B cell (primary cell): ENCODE measurements at regions of chr3 and their contacts with region 1.

Region 1: GRCh38 chr3:127697551-127698240 is 24.9 kb downstream of the ABTB1 start:
- DNase-seq: peak; percentile 77
- ATAC-seq: peak; percentile 74
- H3K4me3 ChIP-seq: peak overlapping the region in 4 of 5 experiments; percentile 9 to 48 (median 42)
- H3K4me3 Mint-ChIP-seq: peak overlapping the region; percentile 82
- H3K27ac ChIP-seq: peak overlapping the region in 1 of 2 donors; percentile 12
- H3K27ac Mint-ChIP-seq: peak overlapping the region; percentile 87
- H3K4me1 ChIP-seq: peaks cover 10 to 22% of the 10 kb centered on the region in 2 donors
- H3K4me1 Mint-ChIP-seq: peaks cover 26% of the 10 kb centered on the region
- H3K27me3 ChIP-seq: no peaks in the 10 kb centered on the region
- H3K27me3 Mint-ChIP-seq: no peaks in the 10 kb centered on the region
- CTCF ChIP-seq: no peak

Region 2: DNA sequence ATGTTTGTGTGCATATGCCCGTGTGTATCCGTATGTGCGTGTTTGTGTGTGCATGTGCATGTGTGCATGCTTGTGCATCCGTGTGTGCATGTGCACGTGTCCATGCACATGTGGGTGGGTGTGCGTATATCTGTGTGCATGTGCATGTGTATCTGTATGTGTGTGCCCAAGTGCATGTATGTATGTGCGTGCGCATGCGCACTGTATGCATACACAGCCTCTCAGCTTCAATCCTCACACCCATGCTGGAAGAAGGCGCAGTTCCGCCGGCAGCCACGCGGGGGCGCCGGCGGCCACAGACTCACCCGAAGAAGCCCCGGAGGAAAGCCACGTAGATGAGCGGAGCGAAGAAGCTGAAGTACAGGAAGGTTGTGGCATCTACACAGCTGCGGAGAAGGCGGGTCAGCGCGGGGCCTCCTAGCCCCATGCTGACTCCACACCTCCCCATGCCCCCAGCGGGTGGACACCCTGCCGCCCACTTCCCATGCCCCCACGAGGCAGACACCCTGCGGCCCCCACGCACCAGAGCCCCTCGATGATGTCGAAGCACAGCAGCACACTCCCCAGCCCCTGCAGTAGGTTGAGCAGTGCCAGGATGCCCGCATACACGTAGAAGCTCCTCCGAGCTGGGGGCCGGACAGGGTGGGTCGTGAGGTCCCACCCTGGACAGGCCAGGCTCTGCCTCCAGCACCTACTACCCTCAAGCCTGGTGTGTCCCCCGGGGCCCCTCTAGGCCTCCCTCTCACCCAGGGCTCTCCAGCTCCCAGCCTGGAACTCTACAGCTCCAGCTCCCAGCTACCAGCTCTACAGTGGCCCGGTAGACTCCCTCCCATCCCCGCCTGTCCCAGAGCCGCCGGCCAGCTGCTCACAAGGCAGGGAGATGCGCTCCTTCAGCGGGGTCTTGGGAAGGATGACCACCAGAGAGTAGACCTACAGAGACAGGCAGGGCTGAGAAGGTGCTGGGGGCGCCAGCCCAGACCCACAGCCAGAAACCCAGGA is 122.5 kb before region 1 on chr3:
- CTCF ChIA-PET with region 1: interaction called, 11 read pairs
- POLR2A ChIA-PET with region 1: interaction called, 5 read pairs
- intact Hi-C with region 1: loop called (anchors 1 kb)
- DNase-seq: peak; percentile 92
- ATAC-seq: peak; percentile 97
- H3K4me3 ChIP-seq: no peak overlapping the region
- H3K4me3 Mint-ChIP-seq: peak overlapping the region; percentile 52
- H3K27ac ChIP-seq: no peak overlapping the region
- H3K27ac Mint-ChIP-seq: peak overlapping the region; percentile 62
- H3K4me1 ChIP-seq: peaks cover 4 to 10% of the 10 kb centered on the region in 2 donors
- H3K4me1 Mint-ChIP-seq: peaks cover 9% of the 10 kb centered on the region
- H3K27me3 ChIP-seq: no peaks in the 10 kb centered on the region
- H3K27me3 Mint-ChIP-seq: no peaks in the 10 kb centered on the region
- CTCF ChIP-seq: peak; percentile 92

Region 3: DNA sequence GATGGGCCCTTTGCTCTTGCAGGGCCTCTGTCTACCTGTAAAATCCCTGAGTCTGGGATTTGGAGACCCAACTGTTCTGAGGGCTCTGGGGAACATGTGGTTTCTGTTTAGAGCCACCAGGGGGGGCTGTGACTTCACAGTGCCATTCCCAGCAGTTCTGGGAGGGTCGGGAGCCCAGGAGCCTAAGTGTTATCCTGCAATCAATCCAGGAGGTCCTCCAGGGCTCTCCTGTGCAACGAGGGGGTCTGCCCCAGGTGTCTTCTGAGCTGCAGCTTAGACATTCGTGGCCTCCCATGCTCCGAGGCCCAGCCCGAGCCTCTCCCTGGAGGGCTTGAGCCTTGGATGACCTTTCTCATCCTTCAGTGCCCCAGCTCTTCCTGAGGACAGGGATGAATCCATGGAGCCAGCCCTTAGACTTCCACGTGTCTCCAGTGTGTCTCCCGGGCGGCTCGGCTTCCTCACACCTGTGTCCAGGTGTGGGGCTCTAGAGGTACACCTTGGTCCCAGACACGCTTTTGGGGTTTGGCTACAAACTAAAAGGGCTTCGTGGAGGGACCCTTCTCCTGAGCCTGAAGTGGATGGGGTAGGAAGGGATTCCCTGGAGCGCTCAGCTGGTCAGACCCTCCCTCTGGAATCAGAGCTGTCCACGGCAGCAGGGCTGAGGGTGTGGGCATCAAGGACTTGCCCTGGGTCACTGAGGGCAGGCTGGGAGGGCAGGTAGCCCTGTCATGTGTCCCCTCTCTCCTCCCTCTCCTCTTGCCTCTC is 45.3 kb before region 1 on chr3:
- CTCF ChIA-PET with region 1: interaction called, 11 read pairs
- POLR2A ChIA-PET with region 1: no interaction called
- intact Hi-C with region 1: no loop called
- DNase-seq: peak; percentile 66
- ATAC-seq: peak; percentile 64
- H3K4me3 ChIP-seq: no peak overlapping the region
- H3K4me3 Mint-ChIP-seq: no peak overlapping the region
- H3K27ac ChIP-seq: no peak overlapping the region
- H3K27ac Mint-ChIP-seq: no peak overlapping the region
- H3K4me1 ChIP-seq: no peaks in the 10 kb centered on the region
- H3K4me1 Mint-ChIP-seq: no peaks in the 10 kb centered on the region
- H3K27me3 ChIP-seq: no peaks in the 10 kb centered on the region
- H3K27me3 Mint-ChIP-seq: no peaks in the 10 kb centered on the region
- CTCF ChIP-seq: peak; percentile 84

Region 4: DNA sequence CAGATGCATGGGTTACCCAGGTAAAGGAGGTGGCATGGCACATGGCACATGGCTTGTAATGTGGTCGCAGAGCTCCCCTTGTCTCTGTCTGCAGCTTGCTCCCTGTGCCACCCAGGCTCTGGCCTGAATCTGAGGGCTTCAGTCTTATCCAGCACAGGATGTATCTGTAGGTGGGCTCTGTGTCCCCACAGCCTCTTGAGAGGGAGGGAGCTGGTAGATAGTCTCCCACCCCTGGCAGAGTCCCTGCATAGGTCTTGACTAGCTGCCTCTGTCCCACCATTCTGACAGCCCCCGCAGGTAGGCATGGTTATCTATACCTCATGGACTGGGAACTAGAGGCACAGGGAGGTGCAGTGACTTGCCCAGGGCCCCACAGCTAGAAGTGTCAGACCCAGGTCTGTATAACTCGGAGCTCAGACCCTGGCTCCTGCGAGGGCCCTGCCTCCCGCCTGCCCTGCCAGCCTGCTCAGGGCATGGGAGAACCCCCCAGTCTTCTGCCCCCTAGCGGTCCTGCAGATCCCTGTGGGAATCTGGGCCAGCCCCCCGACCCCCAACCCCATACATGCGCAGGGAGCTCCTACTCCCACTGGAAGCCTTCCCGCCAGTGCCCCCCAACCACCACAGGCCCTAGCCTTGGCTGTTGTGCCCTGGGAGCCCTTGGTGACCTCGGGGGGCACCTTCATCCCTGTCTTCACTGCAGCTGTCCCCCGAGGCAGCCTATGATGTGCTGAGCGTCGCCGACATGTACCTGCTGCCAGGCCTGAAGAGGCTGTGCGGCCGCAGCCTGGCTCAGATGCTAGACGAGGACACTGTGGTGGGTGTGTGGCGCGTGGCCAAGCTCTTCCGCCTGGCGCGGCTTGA is 18.2 kb before region 1 on chr3:
- CTCF ChIA-PET with region 1: interaction called, 4 read pairs
- POLR2A ChIA-PET with region 1: interaction called, 10 read pairs
- intact Hi-C with region 1: no loop called
- DNase-seq: no peak
- ATAC-seq: no peak
- H3K4me3 ChIP-seq: no peak overlapping the region
- H3K4me3 Mint-ChIP-seq: no peak overlapping the region
- H3K27ac ChIP-seq: no peak overlapping the region
- H3K27ac Mint-ChIP-seq: no peak overlapping the region
- H3K4me1 ChIP-seq: peaks cover 6 to 13% of the 10 kb centered on the region in 2 donors
- H3K4me1 Mint-ChIP-seq: peaks cover 29% of the 10 kb centered on the region
- H3K27me3 ChIP-seq: no peaks in the 10 kb centered on the region
- H3K27me3 Mint-ChIP-seq: no peaks in the 10 kb centered on the region
- CTCF ChIP-seq: no peak

Region 5: DNA sequence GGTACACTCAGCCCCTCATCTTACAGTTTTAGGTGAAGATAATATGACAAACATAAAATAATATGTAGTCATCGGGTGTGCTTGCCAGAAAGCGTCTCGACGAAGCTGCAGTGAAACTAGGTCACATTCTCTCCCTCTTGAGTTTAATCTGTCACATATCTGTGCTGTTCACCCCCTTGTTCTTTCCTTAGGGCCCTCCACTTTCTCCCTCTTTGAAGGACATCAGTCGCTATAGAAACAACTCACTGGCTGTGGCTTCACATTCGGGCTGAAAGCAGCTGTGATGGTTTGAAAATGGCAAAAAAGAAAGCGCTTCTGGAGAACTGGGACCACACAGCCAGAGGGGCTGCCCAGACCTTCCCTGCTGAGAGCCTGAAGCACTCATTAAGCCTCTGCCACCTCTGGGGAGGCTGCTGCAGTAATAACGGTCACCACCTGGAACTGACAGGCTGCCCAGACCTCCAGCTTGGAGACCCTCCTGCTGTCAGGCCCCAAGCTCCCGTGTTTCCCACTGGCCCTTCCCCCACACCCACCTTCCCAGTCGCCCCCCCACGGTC is 25.4 kb after region 1 on chr3:
- CTCF ChIA-PET with region 1: no interaction called
- POLR2A ChIA-PET with region 1: no interaction called
- intact Hi-C with region 1: no loop called
- DNase-seq: no peak
- ATAC-seq: no peak
- H3K4me3 ChIP-seq: no peak overlapping the region
- H3K4me3 Mint-ChIP-seq: no peak overlapping the region
- H3K27ac ChIP-seq: no peak overlapping the region
- H3K27ac Mint-ChIP-seq: peak overlapping the region; percentile 11
- H3K4me1 ChIP-seq: no peaks in the 10 kb centered on the region
- H3K4me1 Mint-ChIP-seq: no peaks in the 10 kb centered on the region
- H3K27me3 ChIP-seq: no peaks in the 10 kb centered on the region
- H3K27me3 Mint-ChIP-seq: no peaks in the 10 kb centered on the region
- CTCF ChIP-seq: no peak

Region 6: DNA sequence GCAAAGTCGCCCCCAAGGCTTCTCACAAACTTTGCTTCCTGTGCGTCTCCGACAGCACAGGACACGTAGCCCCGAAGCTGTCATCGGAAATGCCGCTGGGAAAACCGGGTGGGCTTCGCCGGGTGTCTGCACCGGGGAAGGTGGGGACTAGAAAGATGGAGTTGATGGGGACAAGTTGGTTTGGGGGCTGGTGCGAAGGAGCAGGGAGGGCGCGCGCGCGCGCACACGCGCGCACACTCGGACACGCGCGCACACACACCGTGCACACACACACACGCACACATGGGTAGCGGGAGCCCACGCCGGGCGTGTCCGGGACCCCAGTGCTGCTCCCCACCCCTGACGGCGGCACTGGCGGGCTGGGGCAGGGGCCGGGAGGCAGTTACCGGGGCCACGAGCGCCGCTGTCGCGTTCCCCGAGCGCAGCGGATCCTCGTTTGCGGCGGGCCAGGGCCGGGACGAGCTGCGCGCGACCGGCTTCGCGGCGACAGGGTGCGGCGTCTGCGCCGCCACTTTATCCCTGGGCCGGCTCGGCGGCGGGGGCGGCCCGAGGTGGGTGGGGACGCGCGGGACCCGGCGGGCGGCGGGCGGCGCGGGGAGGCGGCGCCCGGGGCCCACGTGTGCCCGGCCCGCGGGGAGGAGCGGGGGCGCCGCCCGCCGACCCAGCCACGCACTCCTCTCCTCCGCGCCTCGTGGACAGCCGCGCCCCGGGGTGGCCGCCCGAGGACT is 125.2 kb after region 1 on chr3:
- CTCF ChIA-PET with region 1: no interaction called
- POLR2A ChIA-PET with region 1: no interaction called
- intact Hi-C with region 1: loop called (anchors 5 kb)
- DNase-seq: peak; percentile 55
- ATAC-seq: peak; percentile 72
- H3K4me3 ChIP-seq: peak overlapping the region; percentile 41 to 54 (median 48)
- H3K4me3 Mint-ChIP-seq: peak overlapping the region; percentile 90
- H3K27ac ChIP-seq: no peak overlapping the region
- H3K27ac Mint-ChIP-seq: peak overlapping the region; percentile 83
- H3K4me1 ChIP-seq: peaks cover 14 to 21% of the 10 kb centered on the region in 2 donors
- H3K4me1 Mint-ChIP-seq: peaks cover 21% of the 10 kb centered on the region
- H3K27me3 ChIP-seq: peaks cover 0 to 19% (median 6%) of the 10 kb centered on the region in 4 experiments
- H3K27me3 Mint-ChIP-seq: peaks cover 17% of the 10 kb centered on the region
- CTCF ChIP-seq: no peak